ENCODE measurements at regions of chr15 and their contacts with region 1.

Region 1: DNA sequence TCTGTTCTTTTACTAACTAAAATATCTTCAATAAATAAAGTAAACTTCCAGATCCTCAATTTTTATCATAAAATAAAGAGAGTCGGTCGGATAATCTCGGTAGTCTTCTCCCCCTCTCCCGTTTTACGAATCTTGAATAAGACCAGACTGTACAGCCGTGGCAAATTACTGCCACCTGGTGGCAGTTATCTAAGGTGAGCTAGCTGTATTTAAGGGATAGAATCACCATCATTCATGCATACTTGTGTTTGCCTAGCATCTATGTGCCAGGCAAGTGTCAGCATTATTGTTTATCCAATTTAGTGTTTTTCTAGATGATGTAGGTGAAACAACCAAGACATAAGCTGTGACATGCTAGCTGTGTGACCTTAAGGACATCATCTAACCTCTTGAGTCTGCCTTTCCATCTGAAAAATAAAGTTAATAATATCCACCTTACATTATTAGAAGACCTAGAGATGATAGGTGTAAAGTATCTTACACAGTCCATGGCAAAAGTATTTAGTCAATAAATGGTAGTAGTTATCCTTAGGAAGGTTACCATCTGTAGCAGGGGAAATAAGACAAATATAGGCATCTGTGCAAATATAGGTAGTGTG is 21.3 kb downstream of the DUT start:
- DNase-seq: peak; percentile 11 to 76 (median 38)
- ATAC-seq: peak; percentile 77
- H3K4me3 ChIP-seq: no peak overlapping the region
- H3K4me3 Mint-ChIP-seq: no peak overlapping the region
- H3K27ac ChIP-seq: no peak overlapping the region
- H3K27ac Mint-ChIP-seq: no peak overlapping the region
- H3K4me1 ChIP-seq: no peaks in the 10 kb centered on the region
- H3K4me1 Mint-ChIP-seq: peaks cover 6% of the 10 kb centered on the region
- H3K27me3 ChIP-seq: no peaks in the 10 kb centered on the region
- H3K27me3 Mint-ChIP-seq: peaks cover 8% of the 10 kb centered on the region
- CTCF ChIP-seq: peak; percentile 81

Region 2: GRCh38 chr15:47708161-47708980 is 644.2 kb before region 1 on chr15:
- CTCF ChIA-PET with region 1: no interaction called
- POLR2A ChIA-PET with region 1: no interaction called
- intact Hi-C with region 1: loop called in 1 of 2 experiments (anchors 5 kb)
- DNase-seq: no peak
- ATAC-seq: no peak
- H3K4me3 ChIP-seq: no peak overlapping the region
- H3K4me3 Mint-ChIP-seq: no peak overlapping the region
- H3K27ac ChIP-seq: no peak overlapping the region
- H3K27ac Mint-ChIP-seq: no peak overlapping the region
- H3K4me1 ChIP-seq: no peaks in the 10 kb centered on the region
- H3K4me1 Mint-ChIP-seq: no peaks in the 10 kb centered on the region
- H3K27me3 ChIP-seq: peaks cover 0 to 5% of the 10 kb centered on the region in 2 experiments
- H3K27me3 Mint-ChIP-seq: peaks cover 18% of the 10 kb centered on the region
- CTCF ChIP-seq: no peak

Region 3: DNA sequence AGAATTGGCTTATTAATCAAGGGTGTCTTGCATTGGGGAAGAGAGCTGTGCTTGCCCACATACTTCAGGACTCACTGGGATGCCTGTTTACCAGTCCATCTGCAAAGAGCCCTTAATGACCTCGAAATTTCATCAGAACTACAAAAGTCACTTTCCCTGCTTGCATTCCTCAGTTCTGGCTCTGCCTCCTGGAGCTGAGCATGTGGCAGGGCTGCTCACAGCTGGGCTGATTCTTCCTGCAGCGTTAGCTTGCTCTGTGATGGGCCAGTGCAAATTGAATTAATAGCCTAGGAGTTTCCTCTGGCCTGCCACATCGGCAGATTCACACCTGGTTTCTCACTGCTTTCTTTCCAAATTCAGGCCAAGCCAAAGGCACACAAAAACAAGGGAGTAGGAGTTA is 87.5 kb after region 1 on chr15:
- CTCF ChIA-PET with region 1: no interaction called
- POLR2A ChIA-PET with region 1: no interaction called
- intact Hi-C with region 1: no loop called
- DNase-seq: no peak
- ATAC-seq: no peak
- H3K4me3 ChIP-seq: no peak overlapping the region
- H3K4me3 Mint-ChIP-seq: no peak overlapping the region
- H3K27ac ChIP-seq: no peak overlapping the region
- H3K27ac Mint-ChIP-seq: no peak overlapping the region
- H3K4me1 ChIP-seq: no peaks in the 10 kb centered on the region
- H3K4me1 Mint-ChIP-seq: no peaks in the 10 kb centered on the region
- H3K27me3 ChIP-seq: no peaks in the 10 kb centered on the region
- H3K27me3 Mint-ChIP-seq: no peaks in the 10 kb centered on the region
- CTCF ChIP-seq: no peak

Measured in CD4-positive, alpha-beta T cell (primary cell).